Endothelial cell of umbilical vein (primary cell): ENCODE measurements at regions of chr20 and their contacts with region 1.

Region 1: DNA sequence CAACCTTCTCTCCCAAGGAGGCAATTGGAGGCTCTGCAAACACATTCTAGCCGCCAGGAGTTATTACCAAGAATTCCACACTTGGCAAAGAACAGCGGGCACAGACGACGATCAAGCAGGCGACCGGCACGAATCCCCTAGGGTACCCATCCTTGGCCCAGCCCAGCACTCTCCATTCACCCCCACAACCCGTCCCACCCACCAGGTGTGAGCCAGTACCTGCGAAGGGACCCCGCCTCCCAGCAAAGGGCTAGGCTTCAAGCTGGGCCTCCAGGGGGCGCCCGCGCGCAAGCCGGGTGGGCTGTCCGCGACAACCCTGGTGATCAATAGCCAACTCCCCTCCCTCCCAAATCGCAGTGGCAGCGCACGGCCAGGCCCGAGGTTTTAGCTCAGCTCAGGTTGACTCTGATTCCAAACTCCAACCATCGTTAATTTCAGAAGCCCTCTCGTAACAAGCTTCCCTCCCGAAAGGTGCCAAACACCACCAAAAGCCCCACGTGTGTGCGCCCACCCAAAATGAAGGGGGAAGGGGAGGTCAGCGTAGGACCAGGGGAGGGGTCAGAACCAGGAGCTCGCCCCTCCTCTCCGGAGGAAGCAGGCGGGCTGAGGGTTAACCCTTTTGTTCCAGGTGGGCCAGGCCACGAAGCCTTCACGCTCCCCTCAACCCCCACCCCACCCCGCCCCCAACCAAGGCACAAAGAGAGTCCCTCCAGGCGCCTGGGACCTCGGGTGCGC is 2.1 kb downstream of the SALL4 start:
- DNase-seq: peak; percentile 62
- H3K4me3 ChIP-seq: peak overlapping the region; percentile 49 to 80 (median 78)
- H3K27ac ChIP-seq: no peak overlapping the region
- H3K4me1 ChIP-seq: peaks cover 14% of the 10 kb centered on the region
- H3K27me3 ChIP-seq: peaks cover 10 to 30% of the 10 kb centered on the region in 2 experiments
- CTCF ChIP-seq: peak; percentile 95 to 99
- POLR2A ChIP-seq: no peak

Region 2: DNA sequence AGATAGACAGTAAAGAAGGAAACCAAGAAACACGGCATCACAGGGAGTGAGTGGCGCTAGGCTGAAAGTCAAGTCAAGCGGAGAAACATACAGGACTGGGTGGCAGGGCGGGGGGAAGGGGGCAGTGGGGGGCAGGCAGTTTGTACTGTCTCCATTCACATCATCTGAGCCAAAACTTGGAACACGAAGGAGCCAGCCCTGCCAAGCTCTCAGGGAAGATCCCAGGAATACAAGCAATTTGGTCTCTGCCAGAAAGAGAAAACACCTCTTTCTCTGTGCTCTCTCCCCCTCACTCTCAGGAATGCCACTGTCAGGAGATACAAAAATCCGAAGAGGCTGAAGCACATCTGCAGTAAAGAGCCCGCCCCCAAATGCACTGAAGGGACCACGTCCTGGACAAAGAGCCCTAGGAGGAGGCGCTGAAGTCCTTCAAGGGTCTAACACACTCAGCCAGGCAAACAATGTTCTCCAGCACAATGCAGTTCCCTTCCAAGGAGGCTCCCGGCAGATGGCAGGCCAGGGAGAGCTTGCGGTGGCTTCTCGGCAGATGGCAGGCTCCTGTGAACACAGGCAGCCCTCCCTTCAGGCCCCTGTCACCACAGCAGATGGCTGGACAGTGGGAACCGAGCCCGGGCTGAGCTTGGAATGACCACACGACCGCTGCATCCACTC is 122.1 kb before region 1 on chr20:
- CTCF ChIA-PET with region 1: no interaction called
- POLR2A ChIA-PET with region 1: no interaction called
- dilution Hi-C with region 1: no loop called
- intact Hi-C with region 1: no loop called
- DNase-seq: no peak
- H3K4me3 ChIP-seq: no peak overlapping the region
- H3K27ac ChIP-seq: no peak overlapping the region
- H3K4me1 ChIP-seq: no peaks in the 10 kb centered on the region
- H3K27me3 ChIP-seq: no peaks in the 10 kb centered on the region
- CTCF ChIP-seq: no peak
- POLR2A ChIP-seq: no peak

Region 3: DNA sequence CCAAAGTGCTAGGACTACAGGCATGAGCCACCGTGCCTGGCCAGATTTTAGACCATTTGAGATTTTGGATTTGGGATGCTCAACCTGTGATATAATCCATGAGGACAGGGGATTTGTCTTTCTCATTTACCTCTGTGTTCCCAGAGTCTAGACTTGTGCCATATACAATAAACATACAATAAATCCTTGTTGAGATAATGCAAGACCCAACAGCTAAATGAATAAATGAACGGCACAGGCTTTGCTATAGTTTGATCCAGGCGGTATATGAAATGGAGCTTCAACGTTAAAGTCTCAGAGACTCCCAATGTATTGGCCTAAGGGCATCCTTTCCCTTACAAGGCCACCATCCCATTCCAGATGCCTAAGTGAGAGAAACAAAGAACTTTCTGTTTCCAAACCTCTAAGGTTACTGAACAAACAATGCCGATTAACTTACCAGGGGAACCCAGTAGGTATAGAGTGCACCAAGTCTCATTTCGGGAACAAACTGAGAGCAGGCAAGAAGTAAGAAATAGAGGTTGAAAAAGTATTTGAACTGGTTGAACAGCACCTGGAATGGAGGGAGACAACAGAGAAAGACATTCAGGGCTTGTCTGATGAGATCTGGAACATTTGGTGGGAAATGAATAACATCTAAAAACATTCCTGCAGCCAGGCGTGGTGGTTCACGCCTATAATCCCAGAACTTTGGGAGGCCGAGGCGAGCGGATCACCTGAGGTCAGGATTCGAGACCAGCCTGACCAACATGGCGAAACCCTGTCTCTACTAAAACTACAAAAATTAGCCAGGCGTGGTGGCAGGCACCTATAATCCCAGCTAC is 74.6 kb before region 1 on chr20:
- CTCF ChIA-PET with region 1: no interaction called
- POLR2A ChIA-PET with region 1: no interaction called
- dilution Hi-C with region 1: no loop called
- intact Hi-C with region 1: no loop called
- DNase-seq: no peak
- H3K4me3 ChIP-seq: no peak overlapping the region
- H3K27ac ChIP-seq: no peak overlapping the region
- H3K4me1 ChIP-seq: no peaks in the 10 kb centered on the region
- H3K27me3 ChIP-seq: no peaks in the 10 kb centered on the region
- CTCF ChIP-seq: no peak
- POLR2A ChIP-seq: no peak

Region 4: DNA sequence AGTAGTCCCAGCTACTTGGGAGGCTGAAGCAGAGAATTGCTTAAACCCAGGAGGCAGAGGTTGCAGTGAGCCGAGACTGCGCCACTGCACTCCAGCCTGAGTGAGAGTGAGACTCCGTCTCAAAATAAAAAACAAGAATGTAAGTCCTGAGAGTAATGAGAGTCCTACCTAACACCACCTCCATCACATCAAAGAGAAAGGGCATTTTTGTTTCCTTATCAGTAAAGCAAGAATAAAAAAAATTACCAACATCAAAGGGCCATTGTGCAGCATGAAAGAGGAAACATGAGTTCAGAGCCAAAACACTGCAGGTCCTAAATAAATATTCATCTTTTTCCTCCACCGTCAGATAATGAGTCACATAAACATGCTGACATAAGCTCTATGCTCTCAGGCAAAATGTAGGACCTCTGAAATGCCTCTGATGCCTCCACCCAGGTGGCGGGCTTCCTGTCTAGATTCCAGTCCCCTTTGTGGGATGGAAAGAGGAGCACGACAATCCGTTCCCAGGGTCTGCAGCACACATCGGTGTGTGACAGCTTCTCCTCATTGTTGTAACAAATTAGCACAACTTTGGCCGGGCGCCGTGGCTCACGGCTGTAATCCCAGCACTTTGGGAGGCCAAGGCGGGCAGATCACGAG is 39.2 kb before region 1 on chr20:
- CTCF ChIA-PET with region 1: no interaction called
- POLR2A ChIA-PET with region 1: no interaction called
- dilution Hi-C with region 1: no loop called
- intact Hi-C with region 1: no loop called
- DNase-seq: peak; percentile 83
- H3K4me3 ChIP-seq: no peak overlapping the region
- H3K27ac ChIP-seq: no peak overlapping the region
- H3K4me1 ChIP-seq: peaks cover 6% of the 10 kb centered on the region
- H3K27me3 ChIP-seq: no peaks in the 10 kb centered on the region
- CTCF ChIP-seq: no peak
- POLR2A ChIP-seq: no peak

Region 5: GRCh38 chr20:51776261-51776660 is 24.0 kb before region 1 on chr20:
- CTCF ChIA-PET with region 1: interaction called, 11 read pairs
- POLR2A ChIA-PET with region 1: no interaction called
- dilution Hi-C with region 1: no loop called
- intact Hi-C with region 1: no loop called
- DNase-seq: no peak
- H3K4me3 ChIP-seq: no peak overlapping the region
- H3K27ac ChIP-seq: no peak overlapping the region
- H3K4me1 ChIP-seq: no peaks in the 10 kb centered on the region
- H3K27me3 ChIP-seq: no peaks in the 10 kb centered on the region
- CTCF ChIP-seq: no peak
- POLR2A ChIP-seq: no peak

Region 6: GRCh38 chr20:51789434-51789833 is 10.8 kb before region 1 on chr20:
- CTCF ChIA-PET with region 1: interaction called, 21 read pairs
- POLR2A ChIA-PET with region 1: no interaction called
- dilution Hi-C with region 1: no loop called
- intact Hi-C with region 1: no loop called
- DNase-seq: no peak
- H3K4me3 ChIP-seq: no peak overlapping the region
- H3K27ac ChIP-seq: no peak overlapping the region
- H3K4me1 ChIP-seq: no peaks in the 10 kb centered on the region
- H3K27me3 ChIP-seq: peaks cover 0 to 2% of the 10 kb centered on the region in 2 experiments
- CTCF ChIP-seq: no peak
- POLR2A ChIP-seq: no peak

Region 7: DNA sequence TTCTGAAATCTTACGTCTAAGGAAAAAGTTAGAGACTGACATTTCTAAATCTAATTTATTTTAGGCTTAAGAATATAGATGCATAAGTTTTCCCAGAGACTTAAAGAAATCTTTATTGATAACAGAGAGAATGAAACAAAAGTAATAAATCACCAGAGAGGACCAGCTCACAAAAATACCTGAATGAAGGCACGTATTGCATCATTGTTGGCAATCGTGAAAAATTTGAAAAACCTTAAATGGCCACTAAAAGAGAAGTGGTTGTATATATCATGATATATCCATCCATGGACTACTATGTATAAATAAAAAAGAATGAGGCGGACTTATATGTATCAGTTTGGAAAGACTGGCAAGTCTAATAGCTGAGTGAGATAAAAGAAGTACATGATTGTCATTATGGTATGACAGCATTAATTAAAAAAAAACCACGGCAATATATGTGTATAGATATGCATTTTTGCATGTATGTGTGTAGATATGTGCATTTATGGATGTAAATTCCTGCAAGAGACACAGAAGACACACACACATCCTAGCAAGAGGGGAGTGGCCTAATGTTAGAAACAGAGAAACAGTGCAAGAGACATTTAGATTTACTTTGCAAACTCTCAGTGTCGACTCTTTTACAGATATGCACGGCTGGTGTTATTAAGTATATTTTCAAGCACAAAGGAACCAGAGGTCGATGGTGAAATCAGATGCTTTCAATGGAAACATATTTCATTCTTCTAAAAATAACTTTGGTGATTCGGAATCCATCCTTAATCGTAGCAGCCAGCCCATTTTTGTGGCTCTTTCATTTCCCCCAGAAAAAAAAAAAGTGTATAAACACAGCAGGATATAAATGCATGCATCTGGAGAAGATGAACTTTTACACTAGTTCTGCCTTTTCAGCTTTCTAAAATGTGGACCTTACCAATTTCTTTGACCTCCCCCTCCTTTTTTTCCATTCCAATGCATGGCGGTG is 158.2 kb after region 1 on chr20:
- CTCF ChIA-PET with region 1: interaction called, 64 read pairs
- POLR2A ChIA-PET with region 1: no interaction called
- dilution Hi-C with region 1: no loop called
- intact Hi-C with region 1: loop called (anchors 2 kb)
- DNase-seq: no peak
- H3K4me3 ChIP-seq: peak overlapping the region in 1 of 3 experiments; percentile 49
- H3K27ac ChIP-seq: peak overlapping the region; percentile 58
- H3K4me1 ChIP-seq: peaks cover 24% of the 10 kb centered on the region
- H3K27me3 ChIP-seq: no peaks in the 10 kb centered on the region
- CTCF ChIP-seq: no peak
- POLR2A ChIP-seq: no peak

Region 8: DNA sequence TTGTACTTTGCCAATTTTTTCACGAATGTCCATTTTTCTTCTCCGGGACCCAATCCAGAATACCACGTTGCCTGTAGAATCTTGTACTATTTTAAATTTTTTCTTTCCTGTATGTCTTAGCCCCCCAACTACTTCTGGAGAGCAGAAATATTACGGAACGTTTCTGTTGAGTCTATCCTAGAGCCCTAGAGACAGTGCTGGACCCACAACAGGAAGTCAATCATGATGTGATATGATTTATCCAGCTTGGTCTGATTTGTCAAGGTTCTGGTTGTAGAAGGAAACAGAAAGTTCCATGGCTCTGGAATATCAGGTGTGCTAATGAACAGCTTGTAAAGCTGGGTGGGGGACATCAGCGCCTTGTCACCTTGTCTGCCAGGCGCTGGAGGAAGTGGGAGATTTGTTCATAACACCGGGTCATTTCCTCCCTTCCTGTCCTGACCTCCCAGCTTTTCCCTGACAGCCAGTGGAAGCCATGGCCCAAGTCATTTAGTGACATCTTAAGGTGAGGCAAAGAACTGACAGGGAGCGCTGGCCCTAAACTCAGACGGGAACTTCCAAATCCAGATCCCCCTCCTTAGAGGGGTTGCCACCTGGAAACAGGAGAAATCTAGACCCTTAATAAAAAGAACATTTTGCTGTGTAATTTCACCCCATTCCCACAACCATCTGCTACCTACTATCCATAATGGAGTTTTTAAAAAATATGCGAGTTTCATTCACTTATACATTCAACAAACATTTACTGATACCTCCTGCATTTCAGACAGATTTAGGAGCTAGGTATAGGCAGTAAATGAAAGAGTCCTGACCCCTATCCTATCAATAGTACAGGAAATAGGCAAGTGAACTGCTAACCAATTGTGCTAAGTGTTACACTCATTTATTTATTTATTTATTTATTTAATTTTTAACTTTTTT is 260.8 kb after region 1 on chr20:
- CTCF ChIA-PET with region 1: interaction called, 35 read pairs
- POLR2A ChIA-PET with region 1: no interaction called
- dilution Hi-C with region 1: no loop called
- intact Hi-C with region 1: loop called (anchors 1 kb)
- DNase-seq: peak; percentile 82
- H3K4me3 ChIP-seq: no peak overlapping the region
- H3K27ac ChIP-seq: peak overlapping the region; percentile 62
- H3K4me1 ChIP-seq: peaks cover 9% of the 10 kb centered on the region
- H3K27me3 ChIP-seq: no peaks in the 10 kb centered on the region
- CTCF ChIP-seq: peak; percentile 50 to 55
- POLR2A ChIP-seq: no peak